CD14-positive monocyte (primary cell): ENCODE measurements at regions of chr1 and their contacts with region 1.

Region 1: GRCh38 chr1:61851849-61852669 is 109.8 kb downstream of the PATJ start:
- DNase-seq: peak; percentile 23 to 60 (median 39)
- H3K4me3 ChIP-seq: no peak overlapping the region
- H3K4me3 Mint-ChIP-seq: no peak overlapping the region
- H3K27ac ChIP-seq: no peak overlapping the region
- H3K27ac Mint-ChIP-seq: no peak overlapping the region
- H3K4me1 ChIP-seq: no peaks in the 10 kb centered on the region
- H3K4me1 Mint-ChIP-seq: no peaks in the 10 kb centered on the region
- H3K27me3 ChIP-seq: no peaks in the 10 kb centered on the region
- H3K27me3 Mint-ChIP-seq: peaks cover 0 to 2% (median 2%) of the 10 kb centered on the region in 3 donors
- CTCF ChIP-seq: peak; percentile 80

Region 2: DNA sequence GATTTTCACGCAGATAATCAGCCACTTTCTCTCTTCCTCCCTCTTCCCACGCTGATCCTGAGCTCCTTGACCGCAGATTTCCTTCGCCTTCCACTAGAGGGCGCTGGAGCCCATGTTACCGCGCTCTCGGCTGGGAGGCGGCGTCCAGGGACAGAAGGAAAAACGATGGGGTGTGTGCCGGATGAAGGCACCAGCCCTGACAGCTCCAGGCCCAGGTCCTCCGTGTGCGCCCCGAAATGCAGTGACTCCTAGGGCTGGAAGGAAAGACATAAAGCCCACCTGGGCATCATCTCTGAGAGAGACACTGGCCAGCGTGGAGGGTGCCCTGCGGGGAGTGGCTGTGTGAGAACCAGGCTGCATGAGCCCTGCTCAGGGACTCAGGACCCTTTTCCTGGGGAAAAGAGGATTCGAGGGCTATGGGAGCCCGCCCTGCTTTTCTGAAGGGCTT is 1880.6 kb before region 1 on chr1:
- intact Hi-C with region 1: loop called in 1 of 2 experiments (anchors 5 kb)
- DNase-seq: peak; percentile 23 to 33 (median 32)
- H3K4me3 ChIP-seq: no peak overlapping the region
- H3K4me3 Mint-ChIP-seq: peak overlapping the region in 1 of 2 donors; percentile 56
- H3K27ac ChIP-seq: no peak overlapping the region
- H3K27ac Mint-ChIP-seq: peak overlapping the region in 1 of 7 donors; percentile 25
- H3K4me1 ChIP-seq: peaks cover 0 to 5% of the 10 kb centered on the region in 2 donors
- H3K4me1 Mint-ChIP-seq: peaks cover 6% of the 10 kb centered on the region
- H3K27me3 ChIP-seq: peaks cover 0 to 4% of the 10 kb centered on the region in 2 donors
- H3K27me3 Mint-ChIP-seq: peaks cover 0 to 6% (median 2%) of the 10 kb centered on the region in 3 donors
- CTCF ChIP-seq: peak; percentile 91

Region 3: GRCh38 chr1:59978026-59978425 is 1874.0 kb before region 1 on chr1:
- intact Hi-C with region 1: loop called (anchors 2 to 5 kb)
- DNase-seq: no peak
- H3K4me3 ChIP-seq: no peak overlapping the region
- H3K4me3 Mint-ChIP-seq: no peak overlapping the region
- H3K27ac ChIP-seq: no peak overlapping the region
- H3K27ac Mint-ChIP-seq: no peak overlapping the region
- H3K4me1 ChIP-seq: no peaks in the 10 kb centered on the region
- H3K4me1 Mint-ChIP-seq: peaks cover 2% of the 10 kb centered on the region
- H3K27me3 ChIP-seq: peaks cover 0 to 4% of the 10 kb centered on the region in 2 donors
- H3K27me3 Mint-ChIP-seq: peaks cover 0 to 5% (median 0%) of the 10 kb centered on the region in 3 donors
- CTCF ChIP-seq: no peak

Region 4: DNA sequence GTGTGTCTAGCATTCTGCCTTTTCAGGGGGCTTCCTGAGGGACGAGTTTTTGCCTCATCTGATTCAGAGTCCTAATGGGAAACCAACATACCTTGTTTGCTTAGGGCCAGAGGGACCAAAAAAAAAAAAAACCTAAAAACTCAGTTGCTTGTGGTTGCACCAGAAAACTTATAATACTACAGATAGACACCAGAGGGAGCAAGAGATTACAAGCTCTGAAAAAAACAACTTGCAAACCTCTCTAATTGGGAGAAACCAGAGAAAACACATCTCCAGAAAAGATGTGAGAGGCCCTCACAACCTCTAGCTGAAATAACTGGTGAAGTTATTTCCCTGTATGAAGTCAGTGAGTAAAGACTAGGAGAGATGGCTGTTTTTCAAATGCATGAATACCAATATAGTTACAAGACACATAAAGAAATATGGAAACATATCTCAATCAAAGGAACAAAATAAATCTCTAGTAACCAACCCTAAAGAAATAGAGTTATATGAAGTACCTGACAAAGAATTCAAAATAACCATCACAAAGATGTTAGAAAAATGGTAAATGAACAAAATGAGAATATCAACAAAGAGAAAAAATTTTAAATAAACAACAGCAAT is 1003.4 kb before region 1 on chr1:
- intact Hi-C with region 1: loop called (anchors 5 to 10 kb)
- DNase-seq: peak; percentile 13 to 29 (median 23)
- H3K4me3 ChIP-seq: no peak overlapping the region
- H3K4me3 Mint-ChIP-seq: no peak overlapping the region
- H3K27ac ChIP-seq: no peak overlapping the region
- H3K27ac Mint-ChIP-seq: no peak overlapping the region
- H3K4me1 ChIP-seq: no peaks in the 10 kb centered on the region
- H3K4me1 Mint-ChIP-seq: no peaks in the 10 kb centered on the region
- H3K27me3 ChIP-seq: no peaks in the 10 kb centered on the region
- H3K27me3 Mint-ChIP-seq: peaks cover 0 to 2% (median 2%) of the 10 kb centered on the region in 3 donors
- CTCF ChIP-seq: peak; percentile 82

Region 5: DNA sequence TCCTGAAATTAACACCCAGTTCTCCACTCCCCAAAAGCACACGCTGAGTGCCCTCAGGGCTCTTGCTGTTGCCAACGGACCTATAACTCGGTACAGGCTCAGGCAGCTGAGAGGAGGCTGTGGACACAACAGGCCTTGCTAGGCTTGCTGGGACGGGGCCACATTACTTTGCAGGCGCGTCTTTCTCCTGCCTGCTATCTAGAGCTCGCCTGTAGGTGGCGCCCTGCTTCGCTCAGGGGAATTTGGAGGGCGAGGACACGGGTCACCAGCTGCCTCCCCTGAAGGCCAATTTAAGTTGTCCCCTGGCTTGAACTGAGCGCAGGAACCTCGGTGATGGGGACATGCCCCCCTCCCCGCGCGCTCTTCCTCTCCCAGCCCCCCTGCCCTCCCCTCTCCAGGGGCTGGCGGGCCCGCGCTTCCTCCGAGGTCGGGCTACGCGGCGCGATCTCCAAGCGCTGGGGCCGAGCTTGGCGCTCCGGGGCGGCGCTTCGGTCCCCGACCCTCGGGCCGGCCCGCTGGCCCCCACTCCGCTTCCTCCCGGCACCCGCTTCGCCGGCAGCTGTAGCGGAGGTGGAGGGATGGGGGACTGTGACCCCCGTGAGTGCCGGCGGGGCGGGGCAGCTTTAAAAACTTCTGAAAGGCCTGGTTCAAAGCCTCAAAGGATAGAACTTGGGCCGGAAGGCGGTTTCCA is 802.1 kb before region 1 on chr1:
- intact Hi-C with region 1: loop called in 1 of 2 experiments (anchors 5 kb)
- DNase-seq: peak; percentile 80 to 82 (median 82)
- H3K4me3 ChIP-seq: peak overlapping the region; percentile 69 to 95 (median 73)
- H3K4me3 Mint-ChIP-seq: peak overlapping the region; percentile 81 to 84
- H3K27ac ChIP-seq: no peak overlapping the region
- H3K27ac Mint-ChIP-seq: no peak overlapping the region
- H3K4me1 ChIP-seq: peaks cover 23 to 46% of the 10 kb centered on the region in 2 donors
- H3K4me1 Mint-ChIP-seq: peaks cover 40% of the 10 kb centered on the region
- H3K27me3 ChIP-seq: peaks cover 37 to 43% of the 10 kb centered on the region in 2 donors
- H3K27me3 Mint-ChIP-seq: peaks cover 38 to 46% (median 40%) of the 10 kb centered on the region in 3 donors
- CTCF ChIP-seq: peak; percentile 93

Region 6: GRCh38 chr1:61757945-61758344 is 94.1 kb before region 1 on chr1:
- intact Hi-C with region 1: no loop called
- DNase-seq: no peak
- H3K4me3 ChIP-seq: no peak overlapping the region
- H3K4me3 Mint-ChIP-seq: no peak overlapping the region
- H3K27ac ChIP-seq: no peak overlapping the region
- H3K27ac Mint-ChIP-seq: no peak overlapping the region
- H3K4me1 ChIP-seq: no peaks in the 10 kb centered on the region
- H3K4me1 Mint-ChIP-seq: no peaks in the 10 kb centered on the region
- H3K27me3 ChIP-seq: no peaks in the 10 kb centered on the region
- H3K27me3 Mint-ChIP-seq: peaks cover 0 to 2% (median 0%) of the 10 kb centered on the region in 3 donors
- CTCF ChIP-seq: no peak

Region 7: GRCh38 chr1:61980561-61980960 is 128.5 kb after region 1 on chr1:
- intact Hi-C with region 1: no loop called
- DNase-seq: peak in 1 of 3 donors; percentile 4
- H3K4me3 ChIP-seq: no peak overlapping the region
- H3K4me3 Mint-ChIP-seq: no peak overlapping the region
- H3K27ac ChIP-seq: no peak overlapping the region
- H3K27ac Mint-ChIP-seq: no peak overlapping the region
- H3K4me1 ChIP-seq: no peaks in the 10 kb centered on the region
- H3K4me1 Mint-ChIP-seq: no peaks in the 10 kb centered on the region
- H3K27me3 ChIP-seq: no peaks in the 10 kb centered on the region
- H3K27me3 Mint-ChIP-seq: peaks cover 0 to 1% (median 1%) of the 10 kb centered on the region in 3 donors
- CTCF ChIP-seq: no peak